ENCODE measurements at regions of chr16 and their contacts with region 1.

Region 1: DNA sequence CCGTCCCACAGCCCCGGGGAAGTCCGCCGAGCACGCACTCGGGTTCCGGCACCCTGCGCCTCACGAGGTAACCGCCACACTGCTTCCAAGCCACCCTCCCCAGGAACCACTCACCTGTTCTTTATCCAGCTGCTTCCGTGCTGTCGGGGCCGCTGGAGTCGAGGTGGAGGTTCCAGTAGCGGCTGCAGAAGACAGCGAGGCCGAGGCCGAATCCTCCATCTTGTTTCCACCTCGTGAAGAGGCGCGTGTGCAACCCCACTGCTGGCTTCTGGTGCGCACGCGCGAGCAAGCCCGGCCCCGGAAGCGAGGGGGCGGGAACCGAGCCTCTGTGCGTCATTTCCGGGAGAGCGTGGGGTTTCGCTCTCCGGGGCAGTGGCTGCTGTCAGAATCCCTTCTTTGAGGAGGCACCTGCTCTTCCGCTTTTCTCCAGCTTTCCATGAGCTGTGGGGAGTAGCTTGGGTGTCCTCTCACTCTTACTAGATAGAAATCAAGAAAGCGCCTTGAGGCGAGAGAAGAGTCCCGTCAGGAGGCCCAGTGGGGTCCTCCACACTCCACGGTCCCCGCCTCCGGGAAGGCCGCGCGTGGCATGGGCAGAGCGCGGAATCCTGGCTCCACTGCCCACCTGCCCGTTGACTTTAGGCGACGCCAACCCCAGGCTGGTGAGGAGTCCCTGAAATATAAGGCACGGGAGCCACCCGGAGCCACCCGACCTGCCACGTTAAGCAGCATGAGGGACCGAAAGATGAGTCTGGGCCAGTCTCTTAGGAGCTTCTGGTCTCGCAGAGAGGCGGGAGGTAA is at the start of gene RSL1D1:
- DNase-seq: peak; percentile 90 to 96 (median 96)
- H3K4me3 ChIP-seq: peak within 1 kb of the TSS; percentile 79 to 94 (median 85)
- H3K4me3 Mint-ChIP-seq: peak within 1 kb of the TSS; percentile 95 to 96
- H3K27ac ChIP-seq: peak within 1 kb of the TSS; percentile 81 to 95
- H3K27ac Mint-ChIP-seq: peak within 1 kb of the TSS; percentile 95 to 98 (median 97)
- H3K4me1 ChIP-seq: peaks cover 19 to 26% of the 10 kb centered on the region in 2 donors
- H3K4me1 Mint-ChIP-seq: peaks cover 30% of the 10 kb centered on the region
- H3K27me3 ChIP-seq: no peaks in the 10 kb centered on the region
- H3K27me3 Mint-ChIP-seq: peaks cover 0 to 2% (median 2%) of the 10 kb centered on the region in 3 donors
- CTCF ChIP-seq: no peak
- polyA plus RNA-seq, gene RSL1D1: 46.1 to 182 (median 124) TPM

Region 2: GRCh38 chr16:11797166-11797956 is 54.1 kb before region 1 on chr16 and contains the start of gene ZC3H7A:
- intact Hi-C with region 1: loop called (anchors 2 to 5 kb)
- DNase-seq: peak; percentile 95 to 98 (median 97)
- H3K4me3 ChIP-seq: peak within 1 kb of the TSS; percentile 78 to 99 (median 98)
- H3K4me3 Mint-ChIP-seq: peak within 1 kb of the TSS; percentile 92 to 99
- H3K27ac ChIP-seq: peak within 1 kb of the TSS; percentile 99 to 100
- H3K27ac Mint-ChIP-seq: peak within 1 kb of the TSS; percentile 97 to 99 (median 98)
- H3K4me1 ChIP-seq: peaks cover 55 to 73% of the 10 kb centered on the region in 2 donors
- H3K4me1 Mint-ChIP-seq: peaks cover 72% of the 10 kb centered on the region
- H3K27me3 ChIP-seq: no peaks in the 10 kb centered on the region
- H3K27me3 Mint-ChIP-seq: peaks cover 0 to 4% (median 1%) of the 10 kb centered on the region in 3 donors
- CTCF ChIP-seq: peak; percentile 78
- polyA plus RNA-seq, gene ZC3H7A: 22.6 to 62.0 (median 27.5) TPM

Region 3: GRCh38 chr16:11949527-11949926 is 98.0 kb after region 1 on chr16:
- intact Hi-C with region 1: no loop called
- DNase-seq: peak; percentile 13 to 32 (median 26)
- H3K4me3 ChIP-seq: no peak overlapping the region
- H3K4me3 Mint-ChIP-seq: no peak overlapping the region
- H3K27ac ChIP-seq: no peak overlapping the region
- H3K27ac Mint-ChIP-seq: no peak overlapping the region
- H3K4me1 ChIP-seq: no peaks in the 10 kb centered on the region
- H3K4me1 Mint-ChIP-seq: no peaks in the 10 kb centered on the region
- H3K27me3 ChIP-seq: no peaks in the 10 kb centered on the region
- H3K27me3 Mint-ChIP-seq: peaks cover 0 to 3% (median 0%) of the 10 kb centered on the region in 3 donors
- CTCF ChIP-seq: peak; percentile 51